Colonic mucosa (tissue), 4 donors: ENCODE measurements at regions of chr14 and their contacts with region 1.

Region 1: DNA sequence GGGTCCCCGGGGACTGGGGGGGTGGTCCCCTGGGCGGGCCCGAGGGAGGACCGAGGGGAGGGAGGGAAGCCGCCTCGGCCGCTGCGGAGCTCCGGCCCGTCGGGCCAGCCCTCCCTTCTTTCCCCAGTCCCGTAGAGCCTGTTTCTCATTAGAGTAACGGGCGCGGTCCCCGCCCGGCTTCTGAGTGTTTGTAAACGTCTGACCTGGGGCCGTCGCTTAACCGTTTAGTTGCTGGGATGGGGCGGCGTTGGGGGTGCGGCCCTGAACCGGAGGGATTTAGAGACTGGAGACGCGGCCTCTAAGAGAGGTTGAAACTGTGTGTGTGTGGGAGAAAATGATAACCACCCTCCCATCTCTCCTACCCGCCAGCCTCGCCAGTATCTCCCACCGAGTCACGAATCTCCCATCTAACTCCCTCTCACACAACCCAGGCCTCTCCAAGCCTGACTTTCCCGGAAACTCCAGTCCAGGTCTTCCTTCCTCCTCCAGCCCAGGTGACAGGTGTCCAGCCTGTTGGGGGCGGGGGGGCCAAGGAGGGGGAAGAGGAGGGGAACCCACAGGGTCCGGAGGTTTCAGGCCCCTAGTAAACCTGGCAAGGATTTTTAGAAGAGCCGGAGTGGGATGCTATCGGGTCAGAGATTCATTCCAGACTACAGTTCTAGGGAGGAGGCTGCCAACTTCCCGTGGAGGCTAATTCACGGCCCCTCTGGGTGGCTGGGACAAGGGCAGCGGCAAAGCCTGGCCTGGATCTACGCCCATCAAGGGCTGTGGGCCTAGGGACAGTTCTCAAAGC is 1.1 kb upstream of the NFATC4 start:
- DNase-seq: peak; percentile 97
- H3K4me3 ChIP-seq: peak overlapping the region; percentile 42
- H3K27ac ChIP-seq: peak overlapping the region; percentile 72
- H3K4me1 ChIP-seq: peaks cover 9% of the 10 kb centered on the region
- H3K27me3 ChIP-seq: no peaks in the 10 kb centered on the region
- CTCF ChIP-seq: no peak

Region 2: GRCh38 chr14:24431569-24432258 is 64.8 kb after region 1 on chr14:
- intact Hi-C with region 1: loop called (anchors 2 kb)
- DNase-seq: peak; percentile 96
- H3K4me3 ChIP-seq: peak overlapping the region; percentile 74
- H3K27ac ChIP-seq: peak overlapping the region; percentile 92
- H3K4me1 ChIP-seq: peaks cover 21% of the 10 kb centered on the region
- H3K27me3 ChIP-seq: no peaks in the 10 kb centered on the region
- CTCF ChIP-seq: peak; percentile 81